K562 (cell line): ENCODE measurements at regions of chr3 and their contacts with region 1.

Region 1: DNA sequence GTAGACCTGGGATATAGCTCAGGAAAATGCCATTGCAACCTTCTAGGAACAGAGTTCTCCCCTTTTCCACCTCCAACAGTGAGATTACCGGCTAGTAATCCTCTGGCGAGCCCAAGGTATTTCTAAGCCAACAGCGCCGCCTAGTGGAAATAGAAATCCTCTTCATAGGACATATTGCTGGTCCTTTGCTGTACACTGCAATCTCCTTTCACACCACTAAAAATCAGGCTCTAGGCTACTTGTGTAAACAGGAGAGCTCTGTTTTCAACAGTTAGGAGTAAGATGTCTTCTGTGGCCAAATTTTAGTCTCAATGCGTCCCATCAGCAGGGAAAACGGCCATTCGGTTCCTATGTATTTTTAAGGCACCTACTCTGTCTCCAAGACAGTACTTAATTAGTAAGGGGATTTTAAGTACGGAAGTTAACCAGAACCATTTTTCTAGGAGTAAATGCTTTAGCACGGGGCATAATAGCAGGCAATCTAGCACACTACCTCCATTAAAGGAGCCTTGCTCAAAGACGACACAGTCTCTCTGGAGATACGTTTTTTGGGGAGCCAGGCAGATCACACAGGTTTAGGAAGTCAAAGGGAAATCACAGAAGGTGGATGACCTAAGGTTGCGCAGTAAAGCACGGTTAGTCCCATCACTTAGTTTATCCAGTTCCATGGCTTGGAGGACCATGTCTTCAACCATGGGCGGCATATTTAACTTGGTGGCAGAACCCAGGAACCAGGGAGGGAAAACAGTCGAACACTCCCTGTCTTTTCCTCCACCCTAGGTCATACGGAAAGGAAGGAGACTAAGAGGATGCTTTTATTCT is 43.8 kb downstream of the NCEH1 start:
- DNase-seq: peak; percentile 62 to 81 (median 65)
- ATAC-seq: peak; percentile 100
- H3K4me3 ChIP-seq: no peak overlapping the region
- H3K27ac ChIP-seq: no peak overlapping the region
- H3K4me1 ChIP-seq: no peaks in the 10 kb centered on the region
- H3K27me3 ChIP-seq: no peaks in the 10 kb centered on the region
- CTCF ChIP-seq: peak; percentile 84 to 94 (median 87)
- EP300 ChIP-seq: no peak
- POLR2A ChIP-seq: no peak
- RAD21 ChIP-seq: peak; percentile 80 to 86

Region 2: DNA sequence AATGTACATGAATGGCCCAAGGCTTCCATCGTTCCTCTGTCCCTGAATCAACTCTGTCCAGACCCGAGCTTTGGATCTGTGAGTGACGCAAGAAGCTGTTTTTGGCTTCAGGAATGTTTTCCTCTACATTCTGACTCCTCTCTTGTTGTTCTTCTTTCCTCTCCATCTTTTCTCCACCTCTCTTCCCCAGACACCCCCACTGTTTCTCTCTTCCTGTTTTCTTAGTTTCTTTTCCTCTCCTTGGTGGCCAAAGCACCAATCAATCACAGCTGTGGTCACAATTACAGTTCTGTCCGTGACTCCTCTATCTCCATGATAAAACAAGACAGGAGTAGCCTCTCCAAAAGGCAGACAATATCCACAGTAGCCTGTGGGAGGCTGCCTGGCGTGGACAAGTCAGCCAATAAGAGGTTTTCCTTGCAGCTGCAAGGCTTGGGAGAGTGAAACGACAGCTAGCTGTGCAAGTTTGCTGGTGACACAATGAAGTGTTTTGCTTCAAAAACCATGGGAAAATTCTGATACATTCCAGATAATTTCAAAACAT is 828.8 kb before region 1 on chr3:
- CTCF ChIA-PET with region 1: no interaction called
- POLR2A ChIA-PET with region 1: no interaction called
- in situ Hi-C with region 1: no loop called
- intact Hi-C with region 1: loop called (anchors 5 kb)
- DNase-seq: peak in 1 of 4 experiments; percentile 28
- ATAC-seq: peak; percentile 67
- H3K4me3 ChIP-seq: no peak overlapping the region
- H3K27ac ChIP-seq: no peak overlapping the region
- H3K4me1 ChIP-seq: peaks cover 2 to 8% of the 10 kb centered on the region in 2 experiments; a peak in 4 of 5 replicates
- H3K27me3 ChIP-seq: no peaks in the 10 kb centered on the region
- CTCF ChIP-seq: no peak
- EP300 ChIP-seq: no peak
- POLR2A ChIP-seq: no peak
- RAD21 ChIP-seq: no peak; a peak in 1 of 4 replicates